GM12878 (cell line): ENCODE measurements at regions of chr21 and their contacts with region 1.

Region 1: GRCh38 chr21:34333150-34333739 is 30.6 kb upstream of the KCNE2 start:
- DNase-seq: no peak
- ATAC-seq: no peak
- H3K4me3 ChIP-seq: no peak overlapping the region
- H3K27ac ChIP-seq: no peak overlapping the region
- H3K4me1 ChIP-seq: no peaks in the 10 kb centered on the region
- H3K27me3 ChIP-seq: no peaks in the 10 kb centered on the region; a peak in 1 of 4 replicates
- CTCF ChIP-seq: no peak
- EP300 ChIP-seq: no peak
- POLR2A ChIP-seq: no peak
- RAD21 ChIP-seq: no peak

Region 2: DNA sequence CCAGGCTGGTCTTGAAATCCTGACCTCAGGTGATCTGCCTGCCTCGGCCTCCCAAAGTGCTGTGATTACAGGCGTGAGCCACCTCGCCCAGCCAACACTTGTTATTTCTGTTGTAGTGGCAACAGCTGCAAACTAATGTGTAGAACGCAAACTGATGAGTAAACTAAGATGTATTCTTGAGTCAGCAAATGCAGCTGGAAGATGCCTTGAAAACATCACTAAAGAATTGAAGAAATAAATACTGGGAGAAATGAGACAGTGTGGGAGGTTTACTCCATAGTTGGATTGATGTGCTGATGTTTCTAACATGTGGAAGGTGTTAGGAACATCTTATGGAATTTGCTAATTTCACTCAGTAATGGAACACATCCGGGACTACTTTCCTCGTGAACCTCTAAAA is 30.7 kb before region 1 on chr21:
- CTCF ChIA-PET with region 1: no interaction called
- POLR2A ChIA-PET with region 1: no interaction called
- RAD21 ChIA-PET with region 1: no interaction called
- SMC1A ChIA-PET with region 1: no interaction called
- in situ Hi-C with region 1: no loop called
- intact Hi-C with region 1: no loop called
- DNase-seq: no peak
- ATAC-seq: no peak
- H3K4me3 ChIP-seq: no peak overlapping the region
- H3K27ac ChIP-seq: no peak overlapping the region
- H3K4me1 ChIP-seq: no peaks in the 10 kb centered on the region
- H3K27me3 ChIP-seq: no peaks in the 10 kb centered on the region
- CTCF ChIP-seq: no peak
- EP300 ChIP-seq: no peak
- POLR2A ChIP-seq: no peak
- RAD21 ChIP-seq: no peak

Region 3: DNA sequence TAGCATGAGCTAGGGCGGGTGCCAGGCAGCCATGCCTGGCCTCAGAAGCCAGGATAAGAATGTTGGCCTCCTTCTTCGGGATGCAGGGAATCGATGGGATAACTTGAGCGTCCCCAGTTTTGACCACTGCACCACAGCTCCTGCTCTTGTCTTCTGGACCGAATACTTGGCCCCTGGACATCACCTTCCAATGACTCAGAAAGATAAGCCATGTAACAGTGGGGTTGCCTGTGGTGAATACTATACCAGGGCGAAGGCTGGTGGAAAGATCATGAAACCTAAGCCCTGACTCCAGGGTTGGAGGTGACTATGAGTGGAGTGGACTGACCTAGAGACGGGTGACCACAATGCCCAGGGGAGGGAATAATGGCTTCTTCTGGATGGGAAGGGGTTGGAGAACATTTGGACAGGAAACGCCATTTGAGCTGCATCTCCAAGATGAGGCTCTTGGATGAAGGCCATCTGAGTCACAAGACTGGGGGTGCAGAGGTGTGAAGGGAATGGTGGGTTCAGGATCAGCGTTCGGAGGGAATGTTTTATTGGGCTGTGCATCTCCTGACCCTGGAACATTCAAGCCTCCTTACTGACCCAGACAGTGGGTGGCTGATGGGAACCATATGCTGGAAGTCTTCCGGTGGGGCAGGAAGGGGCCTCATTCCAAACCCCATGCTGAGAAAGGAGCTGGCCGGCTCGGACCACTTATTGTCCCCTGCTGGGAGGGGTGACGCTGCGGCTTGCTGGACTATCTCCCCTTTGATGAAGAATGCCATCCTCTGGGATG is 12.0 kb after region 1 on chr21:
- CTCF ChIA-PET with region 1: interaction called, 18 read pairs
- POLR2A ChIA-PET with region 1: no interaction called
- RAD21 ChIA-PET with region 1: no interaction called
- SMC1A ChIA-PET with region 1: no interaction called
- in situ Hi-C with region 1: no loop called
- intact Hi-C with region 1: no loop called
- DNase-seq: no peak
- ATAC-seq: no peak
- H3K4me3 ChIP-seq: no peak overlapping the region
- H3K27ac ChIP-seq: no peak overlapping the region
- H3K4me1 ChIP-seq: no peaks in the 10 kb centered on the region
- H3K27me3 ChIP-seq: no peaks in the 10 kb centered on the region; a peak in 1 of 4 replicates
- CTCF ChIP-seq: no peak
- EP300 ChIP-seq: no peak
- POLR2A ChIP-seq: no peak
- RAD21 ChIP-seq: no peak